PC-3 (cell line): ENCODE measurements at regions of chr15 and their contacts with region 1.

Region 1: DNA sequence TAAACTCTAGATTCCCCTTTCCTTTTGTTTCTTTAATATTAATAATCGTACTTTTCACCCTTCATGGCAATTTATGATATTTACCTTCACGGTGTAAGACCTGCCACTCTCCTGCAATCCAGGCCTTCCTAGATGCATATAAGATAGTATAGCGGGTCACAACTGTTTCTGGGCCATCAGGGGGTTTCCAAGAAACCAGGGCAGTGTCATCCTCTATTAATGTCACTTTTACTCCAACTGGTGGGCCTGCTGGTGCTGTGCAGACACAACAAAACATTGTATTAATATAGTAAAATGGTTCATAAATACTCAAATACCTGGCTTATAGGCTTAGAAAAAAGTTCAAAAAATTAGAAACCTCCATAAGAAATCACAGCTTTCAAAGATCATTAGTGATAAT is 48.9 kb upstream of the PYGO1 start:
- DNase-seq: no peak
- ATAC-seq: no peak
- H3K4me3 ChIP-seq: no peak overlapping the region
- H3K27ac ChIP-seq: no peak overlapping the region
- H3K4me1 ChIP-seq: no peaks in the 10 kb centered on the region
- H3K27me3 ChIP-seq: no peaks in the 10 kb centered on the region
- CTCF ChIP-seq: no peak

Region 2: GRCh38 chr15:55518641-55519040 is 118.4 kb before region 1 on chr15:
- CTCF ChIA-PET with region 1: interaction called, 9 read pairs
- POLR2A ChIA-PET with region 1: no interaction called
- intact Hi-C with region 1: loop called (anchors 1 kb)
- DNase-seq: no peak
- ATAC-seq: no peak
- H3K4me3 ChIP-seq: no peak overlapping the region
- H3K27ac ChIP-seq: no peak overlapping the region
- H3K4me1 ChIP-seq: peaks cover 14% of the 10 kb centered on the region
- H3K27me3 ChIP-seq: no peaks in the 10 kb centered on the region
- CTCF ChIP-seq: peak; percentile 31; the same call in 1 of the 2 replicates

Region 3: GRCh38 chr15:55526559-55527036 is 110.5 kb before region 1 on chr15:
- CTCF ChIA-PET with region 1: no interaction called
- POLR2A ChIA-PET with region 1: no interaction called
- intact Hi-C with region 1: loop called (anchors 1 kb)
- DNase-seq: peak; percentile 53
- ATAC-seq: peak; percentile 55
- H3K4me3 ChIP-seq: no peak overlapping the region
- H3K27ac ChIP-seq: no peak overlapping the region
- H3K4me1 ChIP-seq: no peaks in the 10 kb centered on the region
- H3K27me3 ChIP-seq: no peaks in the 10 kb centered on the region
- CTCF ChIP-seq: peak; percentile 70